Spleen (tissue), 13 donors: ENCODE measurements at regions of chr1 and their contacts with region 1.

Region 1: DNA sequence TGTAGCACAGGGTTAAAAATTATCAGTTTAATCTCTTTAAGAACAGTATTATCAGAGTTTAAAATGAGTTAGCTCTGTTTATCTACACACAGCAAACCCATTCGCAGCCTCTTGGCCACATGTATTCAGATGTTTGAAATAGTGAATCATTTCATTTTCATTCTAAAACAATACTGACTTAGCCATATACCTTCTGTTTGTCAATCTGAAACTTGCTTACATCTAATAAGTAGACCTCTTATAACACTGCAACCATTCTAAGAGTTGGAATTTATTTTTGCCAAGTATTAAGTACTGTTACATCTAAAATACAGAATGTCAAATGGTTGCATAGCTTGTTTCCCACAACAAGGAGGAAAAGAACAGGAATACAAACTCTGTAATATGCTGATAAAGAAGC is 25.4 kb downstream of the ANGEL2 start:
- DNase-seq: no peak
- H3K4me3 ChIP-seq: no peak overlapping the region
- H3K27ac ChIP-seq: no peak overlapping the region
- H3K4me1 ChIP-seq: peaks cover 0 to 2% (median 0%) of the 10 kb centered on the region in 6 donors
- H3K27me3 ChIP-seq: no peaks in the 10 kb centered on the region
- CTCF ChIP-seq: no peak
- POLR2A ChIP-seq: no peak

Region 2: DNA sequence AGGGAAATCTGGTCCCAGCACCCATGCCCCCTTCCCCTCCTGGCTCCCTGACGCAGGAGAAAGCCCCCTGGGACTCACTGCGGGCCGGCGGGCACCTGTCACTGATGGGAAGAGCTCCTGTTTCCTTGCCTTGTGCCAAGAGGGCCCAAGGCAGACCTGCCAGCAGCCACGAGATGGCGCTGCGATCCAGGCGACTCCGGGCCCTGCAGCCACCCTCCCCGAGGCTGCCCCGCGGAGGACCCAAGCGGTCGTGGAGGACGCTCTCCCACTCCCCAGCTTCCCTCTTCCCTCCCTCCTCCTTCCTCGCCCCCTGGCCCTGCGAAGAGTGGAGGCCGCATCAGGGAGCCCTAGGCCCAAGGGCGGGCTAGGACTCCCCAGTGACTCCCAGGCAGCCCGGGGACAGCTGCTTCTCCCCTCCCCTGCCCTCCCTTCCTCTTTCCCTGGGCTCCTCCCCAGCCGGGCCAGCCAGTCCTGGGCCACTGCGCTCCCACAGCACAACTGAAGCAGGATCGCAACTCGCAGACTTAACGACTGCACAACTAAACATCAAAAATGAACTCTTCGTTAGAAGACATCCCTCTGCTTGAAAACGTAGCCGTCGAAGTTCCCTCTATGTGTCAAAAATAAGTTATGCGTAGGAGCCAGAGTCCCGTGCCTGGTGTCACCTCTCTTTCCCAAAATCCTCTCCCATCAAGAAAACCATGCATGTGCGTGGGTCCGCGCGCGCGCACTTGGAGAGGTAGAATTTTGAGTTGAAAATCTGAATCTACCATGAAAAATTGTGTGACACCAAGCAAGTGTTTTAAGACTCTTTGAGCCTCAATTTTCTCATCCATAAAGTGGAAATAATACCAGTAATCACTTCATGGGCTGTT is 324.8 kb before region 1 on chr1:
- intact Hi-C with region 1: loop called (anchors 10 kb)
- DNase-seq: peak; percentile 95
- H3K4me3 ChIP-seq: peak overlapping the region; percentile 26 to 76 (median 46)
- H3K27ac ChIP-seq: peak overlapping the region; percentile 36 to 88 (median 72)
- H3K4me1 ChIP-seq: peaks cover 30 to 63% (median 49%) of the 10 kb centered on the region in 6 donors
- H3K27me3 ChIP-seq: no peaks in the 10 kb centered on the region
- CTCF ChIP-seq: peak; percentile 87 to 98 (median 95)
- POLR2A ChIP-seq: no peak

Region 3: DNA sequence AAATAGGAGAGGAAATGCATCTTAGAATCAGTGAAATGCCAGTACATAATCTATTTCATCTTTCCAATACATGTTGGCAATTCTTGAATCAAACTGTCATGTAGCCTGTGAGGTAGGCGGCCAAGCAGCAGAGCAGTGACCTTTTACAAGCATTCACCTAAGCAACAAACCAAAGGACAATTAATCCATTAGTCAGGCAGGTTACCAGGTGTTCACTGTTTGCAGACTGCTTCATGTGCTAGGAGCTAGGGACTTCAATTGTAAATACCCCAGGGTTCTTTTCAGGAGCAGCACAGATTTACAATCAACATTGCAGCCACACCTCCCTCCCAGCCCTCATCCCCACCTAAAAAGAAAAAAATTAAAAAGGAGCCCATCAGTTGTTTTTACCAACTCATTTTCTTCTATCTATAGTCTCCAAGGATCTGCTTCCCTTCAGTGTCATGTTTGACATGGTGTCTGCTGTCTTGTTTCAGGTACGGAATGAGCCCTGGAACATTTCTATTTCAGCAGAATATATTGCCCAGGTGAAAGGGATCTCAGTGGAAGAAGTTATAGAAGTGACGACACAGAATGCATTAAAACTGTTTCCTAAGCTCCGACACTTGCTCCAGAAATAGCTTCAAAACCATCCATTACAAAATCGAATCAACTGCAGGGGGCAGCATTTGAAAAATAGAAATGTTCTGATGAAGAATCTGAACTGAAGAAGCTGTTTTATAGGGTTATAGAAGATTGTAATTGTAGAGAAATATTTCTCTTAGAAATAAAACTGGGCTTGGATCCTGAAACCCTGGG is 175.5 kb before region 1 on chr1:
- intact Hi-C with region 1: loop called (anchors 10 kb)
- DNase-seq: no peak
- H3K4me3 ChIP-seq: no peak overlapping the region
- H3K27ac ChIP-seq: no peak overlapping the region
- H3K4me1 ChIP-seq: peaks cover 0 to 17% (median 8%) of the 10 kb centered on the region in 6 donors
- H3K27me3 ChIP-seq: no peaks in the 10 kb centered on the region
- CTCF ChIP-seq: peak in 5 of 11 experiments; percentile 17 to 40 (median 27)
- POLR2A ChIP-seq: no peak